Caco-2 (cell line): ENCODE measurements at regions of chr12 and their contacts with region 1.

Region 1: DNA sequence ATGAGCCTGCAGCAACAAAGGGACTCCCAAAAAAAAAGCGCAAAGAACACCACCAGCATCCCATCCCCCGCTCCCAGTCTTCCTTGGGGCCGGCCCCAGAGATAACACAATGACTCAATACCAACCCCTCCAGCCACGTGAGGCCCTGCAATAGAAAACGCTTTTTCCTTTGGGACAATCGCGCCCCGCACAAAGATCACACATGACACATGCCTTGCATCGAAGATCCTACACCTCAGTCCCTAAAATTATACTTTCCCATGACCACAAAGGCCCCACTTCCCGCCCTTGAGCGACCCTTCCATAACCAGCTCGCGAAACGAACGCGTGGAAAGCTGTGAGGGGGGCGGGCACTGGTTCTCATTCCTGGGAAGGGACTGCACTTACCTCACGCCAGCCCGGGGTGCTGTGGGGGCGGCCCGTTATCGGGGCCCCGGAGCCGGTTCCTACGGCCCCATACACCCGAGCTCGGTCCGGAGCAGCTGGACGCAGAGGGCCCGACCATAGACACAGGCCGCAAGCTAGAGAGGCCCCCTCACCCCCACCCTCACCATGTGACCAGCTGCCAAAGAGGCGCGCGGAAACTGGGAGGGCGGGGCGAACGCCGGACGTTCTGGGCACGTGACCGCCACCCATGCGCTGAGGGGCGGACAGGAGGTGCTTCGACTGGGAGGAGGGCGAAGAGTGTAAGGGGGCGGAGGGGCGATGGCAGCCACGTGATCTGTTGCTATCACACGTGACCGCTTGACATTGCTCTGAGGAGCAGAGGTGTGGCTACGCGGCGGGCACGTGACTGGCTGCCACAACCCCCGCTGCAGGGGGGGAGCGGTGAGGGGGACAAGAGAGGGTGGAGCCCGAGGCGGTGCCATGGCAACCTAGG is at the start of gene CDK4:
- DNase-seq: peak; percentile 99 to 100
- H3K4me3 ChIP-seq: peak within 1 kb of the TSS; percentile 83
- H3K4me3 Mint-ChIP-seq: peak within 1 kb of the TSS; percentile 99
- H3K27ac Mint-ChIP-seq: peak within 1 kb of the TSS; percentile 99
- H3K4me1 ChIP-seq: peaks cover 16% of the 10 kb centered on the region; the same call in 1 of the 2 replicates
- H3K4me1 Mint-ChIP-seq: peaks cover 27% of the 10 kb centered on the region
- H3K27me3 ChIP-seq: no peaks in the 10 kb centered on the region
- H3K27me3 Mint-ChIP-seq: no peaks in the 10 kb centered on the region
- CTCF ChIP-seq: no peak
- total RNA-seq, gene CDK4: 205 and 210 TPM in 2 replicates

Region 2: GRCh38 chr12:57631893-57632693 is 119.9 kb before region 1 on chr12:
- CTCF ChIA-PET with region 1: no interaction called
- POLR2A ChIA-PET with region 1: no interaction called
- intact Hi-C with region 1: no loop called
- DNase-seq: peak in 1 of 2 experiments; percentile 42
- H3K4me3 ChIP-seq: peak overlapping the region; percentile 49
- H3K4me3 Mint-ChIP-seq: peak overlapping the region; percentile 49
- H3K27ac Mint-ChIP-seq: no peak overlapping the region
- H3K4me1 ChIP-seq: no peaks in the 10 kb centered on the region
- H3K4me1 Mint-ChIP-seq: peaks cover 5% of the 10 kb centered on the region
- H3K27me3 ChIP-seq: no peaks in the 10 kb centered on the region
- H3K27me3 Mint-ChIP-seq: no peaks in the 10 kb centered on the region
- CTCF ChIP-seq: no peak

Region 3: DNA sequence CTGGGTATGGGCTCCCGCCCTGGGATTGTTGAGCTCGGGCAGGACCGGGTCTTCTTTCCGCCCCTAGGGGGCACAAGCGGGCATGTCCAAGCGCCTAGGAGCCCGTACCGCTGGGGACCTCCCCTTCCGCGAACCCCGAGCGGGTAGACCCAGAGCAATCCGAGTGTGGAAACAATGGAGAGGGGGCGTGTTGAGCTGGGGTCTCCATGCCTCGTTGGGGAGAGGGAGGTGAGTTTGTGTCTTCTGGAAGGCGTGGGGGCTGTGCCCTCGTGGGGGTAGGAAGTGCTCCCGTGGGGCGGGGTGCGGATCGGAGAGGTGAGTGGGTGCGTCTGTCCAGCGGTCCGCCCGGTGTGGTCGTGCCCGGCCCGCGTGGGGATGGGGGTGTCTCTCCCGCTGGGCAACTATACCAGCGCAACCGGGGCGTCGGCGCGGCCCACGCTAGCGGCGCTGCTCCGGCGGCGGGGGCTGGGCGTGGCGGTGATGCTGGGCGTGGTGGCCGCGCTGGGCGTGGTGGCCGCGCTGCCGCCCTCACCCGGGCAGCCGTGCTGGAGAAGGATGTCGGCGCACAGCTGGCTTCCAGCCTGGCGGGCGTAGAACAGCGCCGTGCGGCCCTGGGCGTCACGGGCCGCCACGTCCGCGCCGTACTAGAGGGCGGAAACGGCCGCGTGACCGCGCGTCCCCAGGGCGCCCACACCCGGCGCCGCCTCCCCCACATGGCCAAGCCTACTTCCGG is 25.7 kb before region 1 on chr12:
- CTCF ChIA-PET with region 1: no interaction called
- POLR2A ChIA-PET with region 1: no interaction called
- intact Hi-C with region 1: no loop called
- DNase-seq: peak; percentile 83 to 91
- H3K4me3 ChIP-seq: peak overlapping the region; percentile 55
- H3K4me3 Mint-ChIP-seq: peak overlapping the region; percentile 85
- H3K27ac Mint-ChIP-seq: peak overlapping the region; percentile 45
- H3K4me1 ChIP-seq: no peaks in the 10 kb centered on the region
- H3K4me1 Mint-ChIP-seq: no peaks in the 10 kb centered on the region
- H3K27me3 ChIP-seq: no peaks in the 10 kb centered on the region
- H3K27me3 Mint-ChIP-seq: peaks cover 12% of the 10 kb centered on the region
- CTCF ChIP-seq: peak; percentile 76 to 89

Region 4: DNA sequence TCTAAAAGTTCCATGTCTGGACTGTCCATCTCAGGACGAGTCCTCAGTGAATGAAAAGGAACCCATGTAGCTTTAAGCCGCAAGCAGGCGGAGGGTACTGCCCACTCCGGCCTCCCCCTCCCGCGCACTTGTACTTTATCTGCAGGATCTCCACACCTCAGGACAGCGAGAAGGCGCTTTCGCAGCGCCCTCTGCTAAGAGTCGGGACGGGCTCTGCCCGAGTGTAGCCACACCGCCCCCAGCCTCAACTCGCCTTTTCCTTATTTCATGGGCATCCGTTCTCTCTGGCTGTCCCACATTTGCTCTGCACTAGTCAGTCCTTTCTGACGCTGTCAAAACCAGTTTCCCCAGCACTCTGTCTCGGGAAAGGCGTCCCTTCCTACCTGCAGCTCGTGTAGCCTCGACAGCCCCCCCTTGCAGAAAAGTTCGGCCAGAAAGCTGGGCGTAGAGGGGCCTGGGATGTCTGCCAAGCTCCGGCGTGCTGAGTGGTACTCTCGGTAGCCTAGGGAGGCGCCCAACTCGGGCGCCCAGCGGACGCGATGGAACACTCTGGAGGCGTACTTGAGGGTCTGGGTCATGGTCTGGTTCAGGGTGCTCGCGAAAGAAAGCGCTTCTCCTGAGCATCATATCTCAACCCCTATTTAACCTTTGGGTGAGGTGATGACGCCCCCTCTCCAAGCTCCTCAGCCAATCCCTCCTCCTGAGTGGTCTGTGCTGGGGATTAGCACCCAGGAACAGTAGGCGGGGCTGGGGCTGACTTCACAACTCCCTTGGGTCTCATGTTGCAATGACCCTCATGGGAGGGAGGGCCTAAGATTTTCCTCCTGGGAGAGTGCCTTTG is 14.7 kb after region 1 on chr12 and contains the start of gene CYP27B1:
- CTCF ChIA-PET with region 1: interaction called, 8 read pairs
- POLR2A ChIA-PET with region 1: interaction called, 5 read pairs
- intact Hi-C with region 1: loop called (anchors 2 kb)
- DNase-seq: peak in 1 of 2 experiments; percentile 42
- H3K4me3 ChIP-seq: peak within 1 kb of the TSS; percentile 57
- H3K4me3 Mint-ChIP-seq: peak within 1 kb of the TSS; percentile 90
- H3K27ac Mint-ChIP-seq: peak within 1 kb of the TSS; percentile 54
- H3K4me1 ChIP-seq: peaks cover 13% of the 10 kb centered on the region; the same call in 1 of the 2 replicates
- H3K4me1 Mint-ChIP-seq: peaks cover 14% of the 10 kb centered on the region
- H3K27me3 ChIP-seq: no peaks in the 10 kb centered on the region
- H3K27me3 Mint-ChIP-seq: no peaks in the 10 kb centered on the region
- CTCF ChIP-seq: no peak
- total RNA-seq, gene CYP27B1: 6.9 and 7.1 TPM in 2 replicates